IMR-90 (cell line): ENCODE measurements at regions of chr3 and their contacts with region 1.

Region 1: DNA sequence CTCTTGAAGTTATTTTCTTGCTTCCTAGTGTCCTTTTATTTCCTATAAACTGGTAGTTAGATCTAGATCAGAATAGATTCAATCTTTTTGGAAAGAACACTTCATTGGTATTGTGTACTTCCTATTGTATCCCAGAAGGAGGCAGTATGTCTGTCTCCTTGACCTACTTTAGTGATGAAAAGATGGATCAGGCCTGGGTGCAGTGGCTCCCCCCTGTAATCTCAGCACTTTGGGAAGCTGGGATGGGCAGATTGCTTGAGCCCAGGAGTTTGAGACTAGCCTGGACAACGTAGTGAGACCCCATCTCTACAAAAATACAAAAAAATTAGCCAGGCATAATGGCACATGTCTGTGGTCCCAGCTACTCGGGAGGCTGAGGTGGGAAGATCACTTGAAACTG is 12.0 kb downstream of the BSN start:
- DNase-seq: no peak
- ATAC-seq: no peak
- H3K4me3 ChIP-seq: no peak overlapping the region
- H3K27ac ChIP-seq: no peak overlapping the region
- H3K4me1 ChIP-seq: no peaks in the 10 kb centered on the region
- H3K27me3 ChIP-seq: peaks cover 45% of the 10 kb centered on the region
- CTCF ChIP-seq: peak; percentile 27; the same call in 1 of the 2 replicates
- POLR2A ChIP-seq: no peak
- RAD21 ChIP-seq: 0 out of 2 replicates have a peak, but pooled peaks have one; percentile 20

Region 2: DNA sequence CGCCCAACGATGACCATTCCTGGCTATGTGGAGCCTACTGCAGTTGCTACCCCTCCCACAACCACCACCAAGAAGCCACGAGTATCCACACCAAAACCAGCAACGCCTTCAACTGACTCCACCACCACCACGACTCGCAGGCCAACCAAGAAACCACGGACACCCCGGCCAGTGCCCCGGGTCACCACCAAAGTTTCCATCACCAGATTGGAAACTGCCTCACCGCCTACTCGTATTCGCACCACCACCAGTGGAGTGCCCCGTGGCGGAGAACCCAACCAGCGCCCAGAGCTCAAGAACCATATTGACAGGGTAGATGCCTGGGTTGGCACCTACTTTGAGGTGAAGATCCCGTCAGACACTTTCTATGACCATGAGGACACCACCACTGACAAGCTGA is 34.6 kb before region 1 on chr3:
- CTCF ChIA-PET with region 1: no interaction called
- POLR2A ChIA-PET with region 1: no interaction called
- dilution Hi-C with region 1: no loop called
- in situ Hi-C with region 1: no loop called
- intact Hi-C with region 1: no loop called
- DNase-seq: no peak
- ATAC-seq: no peak
- H3K4me3 ChIP-seq: no peak overlapping the region
- H3K27ac ChIP-seq: no peak overlapping the region
- H3K4me1 ChIP-seq: peaks cover 7% of the 10 kb centered on the region
- H3K27me3 ChIP-seq: no peaks in the 10 kb centered on the region
- CTCF ChIP-seq: no peak
- POLR2A ChIP-seq: no peak
- RAD21 ChIP-seq: no peak

Region 3: GRCh38 chr3:49553692-49554632 is 12.3 kb before region 1 on chr3 and contains the start of gene BSN:
- CTCF ChIA-PET with region 1: no interaction called
- POLR2A ChIA-PET with region 1: interaction called, 15 read pairs
- dilution Hi-C with region 1: no loop called
- in situ Hi-C with region 1: no loop called
- intact Hi-C with region 1: no loop called
- DNase-seq: peak; percentile 82
- ATAC-seq: peak; percentile 95
- H3K4me3 ChIP-seq: peak within 1 kb of the TSS; percentile 58
- H3K27ac ChIP-seq: peak within 1 kb of the TSS; percentile 10; the same call in 1 of the 2 replicates
- H3K4me1 ChIP-seq: peaks cover 2% of the 10 kb centered on the region; the same call in 1 of the 2 replicates
- H3K27me3 ChIP-seq: peaks cover 30% of the 10 kb centered on the region
- CTCF ChIP-seq: no peak
- POLR2A ChIP-seq: no peak
- RAD21 ChIP-seq: no peak
- total RNA-seq, gene BSN: under 0.01 TPM in 2 replicates

Region 4: DNA sequence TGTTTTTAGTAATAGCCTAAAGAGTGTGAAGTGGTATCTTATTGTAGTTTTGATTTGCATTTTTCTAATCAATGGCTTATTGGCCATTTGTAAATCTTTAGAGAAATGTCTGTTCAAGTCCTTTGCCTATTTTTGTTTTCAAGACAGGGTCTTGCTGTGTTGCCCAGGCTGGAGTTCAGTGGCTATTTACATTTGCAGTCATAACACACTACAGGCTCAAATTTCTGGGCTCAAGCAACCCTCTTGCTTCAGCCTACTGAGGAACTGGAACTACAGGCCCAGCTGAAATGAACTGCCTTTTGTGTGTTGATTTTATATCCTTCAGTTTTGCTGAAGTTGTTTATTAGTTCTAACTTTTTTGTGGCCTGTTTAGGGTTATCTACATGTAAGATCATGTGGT is 15.9 kb after region 1 on chr3:
- CTCF ChIA-PET with region 1: no interaction called
- POLR2A ChIA-PET with region 1: no interaction called
- dilution Hi-C with region 1: no loop called
- in situ Hi-C with region 1: no loop called
- intact Hi-C with region 1: no loop called
- DNase-seq: no peak
- ATAC-seq: no peak
- H3K4me3 ChIP-seq: no peak overlapping the region
- H3K27ac ChIP-seq: no peak overlapping the region
- H3K4me1 ChIP-seq: no peaks in the 10 kb centered on the region
- H3K27me3 ChIP-seq: peaks cover 3% of the 10 kb centered on the region; the same call in 1 of the 2 replicates
- CTCF ChIP-seq: no peak
- POLR2A ChIP-seq: no peak
- RAD21 ChIP-seq: no peak

Region 5: DNA sequence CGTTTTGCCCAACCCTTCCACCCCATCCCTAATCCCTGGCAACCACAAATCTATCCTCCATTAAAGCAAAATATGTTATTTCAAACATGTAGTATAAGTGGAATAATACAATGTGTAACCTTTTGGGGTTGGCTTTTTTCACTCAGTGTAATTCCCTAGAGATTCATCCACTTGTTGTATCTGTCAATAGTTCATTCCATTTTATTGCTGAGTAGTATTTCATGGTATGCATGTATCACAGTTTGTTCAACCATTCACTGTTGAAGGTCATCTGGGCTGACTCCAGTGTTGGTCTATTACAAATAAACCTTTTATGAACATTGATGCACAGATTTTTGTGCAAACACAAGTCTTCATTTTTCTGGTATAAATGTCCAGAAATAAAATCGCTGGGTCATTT is 26.7 kb after region 1 on chr3:
- CTCF ChIA-PET with region 1: no interaction called
- POLR2A ChIA-PET with region 1: no interaction called
- dilution Hi-C with region 1: no loop called
- in situ Hi-C with region 1: no loop called
- intact Hi-C with region 1: no loop called
- DNase-seq: peak; percentile 39
- ATAC-seq: peak; percentile 61
- H3K4me3 ChIP-seq: no peak overlapping the region
- H3K27ac ChIP-seq: no peak overlapping the region
- H3K4me1 ChIP-seq: no peaks in the 10 kb centered on the region
- H3K27me3 ChIP-seq: no peaks in the 10 kb centered on the region; the same call in 1 of the 2 replicates
- CTCF ChIP-seq: no peak
- POLR2A ChIP-seq: no peak
- RAD21 ChIP-seq: no peak

Region 6: DNA sequence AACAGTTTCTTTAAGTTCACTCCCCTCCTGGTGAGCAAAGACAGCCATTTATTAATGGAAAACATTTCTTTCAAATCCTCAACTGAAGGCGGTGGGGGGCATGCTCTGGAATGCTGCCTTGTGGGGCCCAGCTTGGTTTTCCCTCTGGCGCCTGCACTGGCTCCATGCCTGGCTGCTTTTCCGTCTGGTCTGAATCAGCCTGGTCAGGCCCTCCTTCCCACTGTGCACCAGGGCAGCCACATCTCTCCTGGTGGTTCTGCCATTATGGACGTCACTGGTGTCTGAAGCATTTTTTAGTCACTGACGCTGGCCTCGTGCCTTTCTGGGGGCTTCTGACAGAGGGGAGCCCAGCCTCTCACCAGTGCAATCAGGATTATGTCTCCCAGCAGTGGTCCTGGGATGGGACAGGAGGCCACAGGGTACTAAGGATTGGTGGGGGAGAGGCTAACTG is 50.2 kb after region 1 on chr3:
- CTCF ChIA-PET with region 1: no interaction called
- POLR2A ChIA-PET with region 1: no interaction called
- dilution Hi-C with region 1: no loop called
- in situ Hi-C with region 1: no loop called
- intact Hi-C with region 1: loop called (anchors 5 kb)
- DNase-seq: peak; percentile 56
- ATAC-seq: peak; percentile 93
- H3K4me3 ChIP-seq: no peak overlapping the region
- H3K27ac ChIP-seq: no peak overlapping the region
- H3K4me1 ChIP-seq: peaks cover 5% of the 10 kb centered on the region
- H3K27me3 ChIP-seq: peaks cover 12% of the 10 kb centered on the region
- CTCF ChIP-seq: no peak
- POLR2A ChIP-seq: no peak
- RAD21 ChIP-seq: no peak

Region 7: GRCh38 chr3:49673715-49674496 is 107.6 kb after region 1 on chr3 and contains the start of gene APEH:
- CTCF ChIA-PET with region 1: no interaction called
- POLR2A ChIA-PET with region 1: no interaction called
- dilution Hi-C with region 1: no loop called
- in situ Hi-C with region 1: no loop called
- intact Hi-C with region 1: loop called (anchors 1 kb)
- DNase-seq: peak; percentile 96
- ATAC-seq: peak; percentile 93
- H3K4me3 ChIP-seq: peak within 1 kb of the TSS; percentile 86
- H3K27ac ChIP-seq: peak within 1 kb of the TSS; percentile 90
- H3K4me1 ChIP-seq: peaks cover 9% of the 10 kb centered on the region
- H3K27me3 ChIP-seq: no peaks in the 10 kb centered on the region
- CTCF ChIP-seq: no peak
- POLR2A ChIP-seq: peak; percentile 82
- RAD21 ChIP-seq: no peak
- total RNA-seq, gene APEH: 116 and 142 TPM in 2 replicates

Region 8: DNA sequence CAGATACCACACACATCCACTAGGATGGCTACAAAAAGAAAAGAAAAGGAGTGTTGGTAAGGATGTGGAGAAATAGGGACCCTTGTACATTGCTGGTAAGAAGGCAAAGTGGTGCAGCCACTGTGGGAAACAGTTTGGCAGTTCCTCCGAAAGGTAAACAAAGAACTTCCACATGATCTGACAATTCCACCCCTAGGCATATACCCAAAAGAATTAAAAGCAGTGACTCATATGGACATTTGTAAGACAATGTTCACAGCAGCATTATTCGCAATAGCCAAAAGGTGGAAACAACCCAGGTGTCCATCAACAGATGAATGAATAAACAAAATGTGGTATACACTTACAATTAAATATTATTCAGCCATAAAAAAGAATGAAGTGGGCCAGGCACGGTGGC is 179.7 kb after region 1 on chr3:
- CTCF ChIA-PET with region 1: no interaction called
- POLR2A ChIA-PET with region 1: no interaction called
- dilution Hi-C with region 1: no loop called
- in situ Hi-C with region 1: no loop called
- intact Hi-C with region 1: no loop called
- DNase-seq: peak; percentile 72
- ATAC-seq: no peak
- H3K4me3 ChIP-seq: no peak overlapping the region
- H3K27ac ChIP-seq: no peak overlapping the region
- H3K4me1 ChIP-seq: peaks cover 7% of the 10 kb centered on the region; the same call in 1 of the 2 replicates
- H3K27me3 ChIP-seq: no peaks in the 10 kb centered on the region
- CTCF ChIP-seq: no peak
- POLR2A ChIP-seq: no peak
- RAD21 ChIP-seq: no peak